ENCODE measurements at regions of chr18 and their contacts with region 1.

Region 1: GRCh38 chr18:62183578-62184195 is 3.2 kb downstream of the PIGN start:
- DNase-seq: no peak
- ATAC-seq: no peak
- H3K4me3 ChIP-seq: no peak overlapping the region
- H3K27ac ChIP-seq: no peak overlapping the region
- H3K4me1 ChIP-seq: peaks cover 27% of the 10 kb centered on the region
- H3K27me3 ChIP-seq: no peaks in the 10 kb centered on the region
- CTCF ChIP-seq: peak; percentile 94

Region 2: DNA sequence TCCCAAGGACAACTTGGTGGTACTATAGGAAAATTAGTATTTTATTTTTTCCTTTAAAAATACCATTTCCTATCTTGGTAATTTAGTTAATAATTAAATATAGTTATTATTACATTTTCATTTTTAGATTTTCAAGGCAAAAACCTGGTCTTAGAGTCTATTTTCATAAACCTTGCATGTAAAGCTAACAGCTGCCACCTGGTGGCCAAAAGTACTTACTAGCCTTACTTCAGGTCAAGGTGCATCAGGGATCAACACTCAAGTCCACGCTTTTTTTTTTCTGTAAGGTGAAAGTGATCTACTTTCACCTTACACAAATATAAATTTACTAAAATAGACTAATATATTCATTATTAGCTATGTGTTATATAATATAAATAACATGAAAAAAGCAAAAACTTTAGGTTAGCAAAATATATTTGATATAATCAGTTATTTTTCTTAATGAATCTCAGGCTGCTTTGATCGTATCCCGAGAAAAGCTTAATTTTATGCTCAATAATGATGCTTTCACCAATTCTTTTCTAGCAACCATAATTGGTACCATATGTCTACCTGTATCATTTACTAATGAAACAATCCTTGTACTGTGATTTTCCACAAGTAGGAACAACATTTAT is 65.9 kb after region 1 on chr18:
- intact Hi-C with region 1: loop called (anchors 2 kb)
- DNase-seq: peak; percentile 62
- ATAC-seq: peak in 1 of 2 donors; percentile 66
- H3K4me3 ChIP-seq: no peak overlapping the region
- H3K27ac ChIP-seq: no peak overlapping the region
- H3K4me1 ChIP-seq: no peaks in the 10 kb centered on the region
- H3K27me3 ChIP-seq: no peaks in the 10 kb centered on the region
- CTCF ChIP-seq: peak; percentile 80

Region 3: DNA sequence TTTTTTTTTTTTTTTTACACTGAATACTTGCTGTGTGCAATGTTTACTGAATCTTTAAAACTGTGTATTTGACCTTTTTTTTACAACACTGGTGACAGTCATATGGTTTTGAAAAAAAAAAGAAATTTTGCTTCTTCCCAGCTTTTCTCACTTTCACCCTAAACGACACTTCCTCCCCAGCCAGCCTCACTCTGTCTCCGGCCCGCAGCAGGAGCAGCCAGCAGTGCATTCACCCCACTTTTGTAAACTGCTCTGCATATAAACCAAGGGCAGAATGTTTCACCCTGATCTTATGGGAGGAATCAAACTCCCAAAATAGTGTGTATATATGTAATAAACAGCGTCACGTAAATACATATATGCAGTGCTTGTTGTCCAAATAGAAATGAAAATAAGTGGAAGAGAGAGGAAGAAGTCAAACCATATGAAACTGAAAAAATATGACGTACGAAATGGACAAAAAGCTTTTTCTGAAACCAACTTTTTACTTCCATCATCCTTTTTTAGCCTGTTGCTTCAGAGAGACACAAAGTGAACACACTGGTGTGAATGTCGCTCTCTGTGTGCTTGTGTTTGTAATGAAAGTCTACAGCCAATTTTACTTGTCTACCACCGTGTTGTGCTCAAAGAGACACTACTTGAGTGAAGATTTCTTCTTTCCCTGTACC is 393.3 kb after region 1 on chr18:
- intact Hi-C with region 1: no loop called
- DNase-seq: no peak
- ATAC-seq: no peak
- H3K4me3 ChIP-seq: no peak overlapping the region
- H3K27ac ChIP-seq: no peak overlapping the region
- H3K4me1 ChIP-seq: peaks cover 6% of the 10 kb centered on the region
- H3K27me3 ChIP-seq: no peaks in the 10 kb centered on the region
- CTCF ChIP-seq: no peak

Measured in lower lobe of right lung (tissue), 2 donors.